Heart right ventricle (tissue), 16 donors: ENCODE measurements at regions of chr3 and their contacts with region 1.

Region 1: DNA sequence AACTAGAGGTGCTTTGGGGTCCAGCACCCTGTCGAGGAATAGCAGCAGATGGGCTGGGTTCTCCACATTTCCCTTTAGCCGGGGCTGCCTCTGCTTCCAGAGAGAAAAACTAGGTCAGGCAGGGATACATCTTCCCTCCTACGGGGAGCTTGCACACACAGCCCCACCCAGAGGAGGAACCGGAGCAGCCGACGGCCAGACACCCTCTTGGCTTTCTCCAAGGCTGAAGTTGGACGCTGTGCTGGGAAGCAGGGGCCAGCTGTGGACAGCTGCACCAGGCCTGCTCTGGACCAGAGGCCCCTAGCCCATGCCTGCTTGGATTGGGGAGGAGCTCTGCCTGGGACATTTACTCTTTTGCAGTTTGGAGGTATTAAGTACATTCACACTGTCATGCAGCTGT is 44.7 kb upstream of the NR2C2 start:
- DNase-seq: peak; percentile 66 to 70
- ATAC-seq: peak; percentile 86 to 94 (median 92)
- H3K4me3 ChIP-seq: no peak overlapping the region
- H3K27ac ChIP-seq: peak overlapping the region in 3 of 10 donors; percentile 6 to 48 (median 15)
- H3K4me1 ChIP-seq: peaks cover 0 to 30% (median 11%) of the 10 kb centered on the region in 9 donors
- H3K27me3 ChIP-seq: peaks cover 0 to 22% (median 0%) of the 10 kb centered on the region in 7 donors
- CTCF ChIP-seq: peak in 4 of 9 donors; percentile 17 to 40 (median 28)

Region 2: GRCh38 chr3:14836049-14836468 is 66.7 kb before region 1 on chr3:
- intact Hi-C with region 1: loop called in 1 of 10 experiments (anchors 5 kb)
- DNase-seq: peak; percentile 72 to 80
- ATAC-seq: peak; percentile 65 to 87 (median 78)
- H3K4me3 ChIP-seq: no peak overlapping the region
- H3K27ac ChIP-seq: peak overlapping the region in 7 of 10 donors; percentile 6 to 70 (median 62)
- H3K4me1 ChIP-seq: peaks cover 23 to 94% (median 49%) of the 10 kb centered on the region in 9 donors
- H3K27me3 ChIP-seq: no peaks in the 10 kb centered on the region
- CTCF ChIP-seq: no peak

Region 3: GRCh38 chr3:14997941-14998340 is 95.2 kb after region 1 on chr3:
- intact Hi-C with region 1: no loop called
- DNase-seq: no peak
- ATAC-seq: no peak
- H3K4me3 ChIP-seq: no peak overlapping the region
- H3K27ac ChIP-seq: no peak overlapping the region
- H3K4me1 ChIP-seq: peaks cover 0 to 6% (median 0%) of the 10 kb centered on the region in 9 donors
- H3K27me3 ChIP-seq: no peaks in the 10 kb centered on the region
- CTCF ChIP-seq: no peak

Region 4: GRCh38 chr3:15253023-15253697 is 350.4 kb after region 1 on chr3:
- intact Hi-C with region 1: no loop called
- DNase-seq: no peak
- ATAC-seq: no peak
- H3K4me3 ChIP-seq: no peak overlapping the region
- H3K27ac ChIP-seq: peak overlapping the region in 1 of 10 donors; percentile 3
- H3K4me1 ChIP-seq: peaks cover 0 to 24% (median 5%) of the 10 kb centered on the region in 9 donors
- H3K27me3 ChIP-seq: no peaks in the 10 kb centered on the region
- CTCF ChIP-seq: no peak